Panc1 (cell line): ENCODE measurements at regions of chr6 and their contacts with region 1.

Region 1: GRCh38 chr6:159789377-159790148 is at the start of gene TCP1:
- DNase-seq: peak; percentile 96
- ATAC-seq: peak; percentile 93
- H3K4me3 ChIP-seq: peak within 1 kb of the TSS; percentile 98 to 99
- H3K27ac ChIP-seq: peak within 1 kb of the TSS; percentile 99
- H3K4me1 ChIP-seq: peaks cover 28% of the 10 kb centered on the region; the same call in 1 of the 2 replicates
- H3K27me3 ChIP-seq: no peaks in the 10 kb centered on the region
- CTCF ChIP-seq: no peak
- total RNA-seq, gene TCP1: 340 TPM

Region 2: DNA sequence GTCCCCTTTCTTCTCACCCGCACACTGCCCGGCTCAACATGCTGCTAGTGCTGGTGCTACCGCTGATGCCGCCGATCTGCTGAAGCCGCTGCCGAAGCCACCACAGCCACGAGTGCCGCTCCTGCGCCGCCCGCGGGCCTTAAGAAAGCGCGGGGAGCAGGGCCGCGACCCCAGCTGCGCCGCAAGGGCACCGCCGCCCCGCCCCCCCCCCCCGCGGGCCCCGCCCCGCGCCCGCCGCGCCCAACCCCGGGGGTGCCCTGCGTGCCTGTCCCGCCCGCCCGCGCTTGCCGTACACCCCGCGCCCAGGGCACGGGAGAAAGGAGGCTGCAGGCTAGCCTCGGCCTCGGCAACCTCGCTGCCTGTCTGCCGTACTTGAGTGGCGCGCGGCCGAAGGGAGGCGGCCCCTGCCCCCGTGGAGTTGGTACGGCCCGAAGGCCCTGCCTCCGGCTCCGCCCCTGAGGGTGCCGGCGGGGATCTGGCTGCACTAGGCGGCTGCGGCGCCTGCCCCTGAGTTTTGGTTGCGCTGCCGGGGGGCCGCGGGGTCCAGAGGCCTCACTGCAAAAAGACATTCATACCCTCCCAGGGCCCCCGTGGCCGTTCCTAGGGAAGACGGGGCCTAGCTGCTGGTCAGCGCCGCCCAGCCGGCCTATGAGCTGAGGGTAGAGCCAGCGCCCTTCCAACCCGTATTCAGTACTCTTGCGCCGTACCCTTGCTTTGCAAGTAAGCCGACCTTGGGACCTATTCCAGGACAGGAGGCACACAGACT is 96.3 kb before region 1 on chr6 and contains the start of gene SOD2:
- CTCF ChIA-PET with region 1: no interaction called
- POLR2A ChIA-PET with region 1: no interaction called
- in situ Hi-C with region 1: no loop called
- intact Hi-C with region 1: loop called (anchors 5 kb)
- DNase-seq: no peak
- ATAC-seq: peak; percentile 92
- H3K4me3 ChIP-seq: peak within 1 kb of the TSS; percentile 69 to 72
- H3K27ac ChIP-seq: peak within 1 kb of the TSS; percentile 95
- H3K4me1 ChIP-seq: peaks cover 21% of the 10 kb centered on the region
- H3K27me3 ChIP-seq: no peaks in the 10 kb centered on the region
- CTCF ChIP-seq: no peak
- total RNA-seq, gene SOD2: 180 TPM

Region 3: GRCh38 chr6:159874435-159874834 is 84.9 kb after region 1 on chr6:
- CTCF ChIA-PET with region 1: no interaction called
- POLR2A ChIA-PET with region 1: interaction called, 17 read pairs
- in situ Hi-C with region 1: no loop called
- intact Hi-C with region 1: no loop called
- DNase-seq: no peak
- ATAC-seq: no peak
- H3K4me3 ChIP-seq: no peak overlapping the region
- H3K27ac ChIP-seq: no peak overlapping the region
- H3K4me1 ChIP-seq: no peaks in the 10 kb centered on the region
- H3K27me3 ChIP-seq: no peaks in the 10 kb centered on the region
- CTCF ChIP-seq: no peak